ENCODE measurements at regions of chr2 and their contacts with region 1.

Region 1: DNA sequence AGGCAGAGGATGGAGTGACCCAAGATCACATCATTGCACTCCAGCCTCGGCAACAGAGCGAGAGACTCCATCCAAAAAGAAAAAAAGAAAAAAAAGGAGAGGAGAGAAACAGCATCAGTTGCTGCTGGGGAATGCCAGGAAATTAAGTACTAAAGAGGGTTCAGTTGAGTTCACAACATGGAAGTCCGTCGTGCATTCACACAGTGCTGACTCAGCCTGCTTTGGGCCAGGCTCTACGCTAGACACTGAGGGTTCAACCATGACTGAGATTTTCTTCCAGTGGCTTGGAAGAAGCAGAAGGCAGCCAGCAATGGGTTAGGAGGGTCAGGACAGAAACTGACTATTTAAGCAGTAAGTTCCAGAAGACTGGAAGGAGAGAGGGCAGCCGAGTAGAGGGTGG is 108.8 kb downstream of the FMNL2 start:
- DNase-seq: no peak
- ATAC-seq: no peak
- H3K4me3 ChIP-seq: no peak overlapping the region
- H3K27ac ChIP-seq: peak overlapping the region in 3 of 12 donors; percentile 1 to 70 (median 2)
- H3K4me1 ChIP-seq: peaks cover 0 to 73% (median 20%) of the 10 kb centered on the region in 12 donors
- H3K27me3 ChIP-seq: no peaks in the 10 kb centered on the region
- CTCF ChIP-seq: no peak
- POLR2A ChIP-seq: no peak

Region 2: GRCh38 chr2:152483276-152484063 is 39.7 kb after region 1 on chr2:
- intact Hi-C with region 1: loop called in 1 of 10 experiments (anchors 5 kb)
- DNase-seq: no peak
- ATAC-seq: no peak
- H3K4me3 ChIP-seq: no peak overlapping the region
- H3K27ac ChIP-seq: no peak overlapping the region
- H3K4me1 ChIP-seq: peaks cover 0 to 35% (median 4%) of the 10 kb centered on the region in 12 donors
- H3K27me3 ChIP-seq: no peaks in the 10 kb centered on the region
- CTCF ChIP-seq: no peak
- POLR2A ChIP-seq: no peak

Region 3: DNA sequence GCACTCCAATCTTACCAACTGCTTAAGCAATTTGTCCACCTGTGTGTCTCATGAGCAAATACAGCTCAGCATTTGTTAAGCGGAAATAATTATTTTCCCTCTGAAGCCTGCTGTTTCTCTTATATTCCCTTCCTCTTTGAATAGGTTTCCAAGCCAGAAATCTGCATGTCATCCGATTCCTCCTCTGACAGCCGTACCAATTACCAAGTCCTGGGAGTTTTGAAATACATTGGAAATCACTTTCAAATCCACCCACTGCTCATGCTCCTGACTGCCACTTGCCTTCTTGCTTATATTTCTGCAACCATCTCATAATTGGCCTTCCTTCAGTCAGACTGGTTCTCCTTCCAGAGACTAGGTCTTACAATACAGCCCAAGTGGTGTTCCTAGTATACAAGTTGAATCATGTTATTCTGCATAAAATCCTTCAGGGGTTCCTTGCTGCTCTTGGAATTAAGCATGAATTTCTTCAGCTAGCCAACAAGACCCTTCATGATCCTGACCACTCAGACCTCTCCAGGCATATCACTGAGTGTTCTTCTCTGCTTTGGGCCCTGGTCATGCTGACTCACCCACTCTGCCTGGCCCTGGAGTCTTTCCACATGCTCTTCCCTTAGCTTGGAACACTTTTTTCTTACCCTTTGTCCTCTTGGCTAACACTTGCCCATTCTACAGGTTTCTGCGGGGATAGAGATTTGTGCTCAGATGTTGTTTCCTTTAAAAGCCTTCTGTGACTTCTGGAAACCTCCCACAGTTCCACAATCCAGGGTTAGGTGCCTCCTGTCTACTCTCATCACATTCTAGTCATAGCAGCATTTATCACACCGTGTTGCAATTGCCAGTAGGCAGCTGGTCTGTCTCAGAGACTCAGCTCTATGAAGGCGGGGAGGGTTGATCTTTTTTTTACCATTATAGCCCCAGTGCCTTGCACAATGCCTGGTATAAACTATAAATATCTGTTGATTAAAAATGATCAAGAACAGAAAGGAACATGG is 432.2 kb after region 1 on chr2:
- intact Hi-C with region 1: no loop called
- DNase-seq: no peak
- ATAC-seq: no peak
- H3K4me3 ChIP-seq: no peak overlapping the region
- H3K27ac ChIP-seq: no peak overlapping the region
- H3K4me1 ChIP-seq: no peaks in the 10 kb centered on the region
- H3K27me3 ChIP-seq: no peaks in the 10 kb centered on the region
- CTCF ChIP-seq: no peak
- POLR2A ChIP-seq: no peak